OCI-LY7 (cell line): ENCODE measurements at regions of chr10 and their contacts with region 1.

Region 1: GRCh38 chr10:72098301-72099053 is 10.1 kb upstream of the SPOCK2 start:
- DNase-seq: no peak
- H3K4me3 ChIP-seq: no peak overlapping the region
- H3K27ac ChIP-seq: no peak overlapping the region
- H3K4me1 ChIP-seq: no peaks in the 10 kb centered on the region
- CTCF ChIP-seq: no peak

Region 2: GRCh38 chr10:72260588-72261322 is 162.3 kb after region 1 on chr10:
- CTCF ChIA-PET with region 1: no interaction called
- POLR2A ChIA-PET with region 1: interaction called, 12 read pairs
- intact Hi-C with region 1: no loop called
- DNase-seq: peak; percentile 91
- H3K4me3 ChIP-seq: peak overlapping the region; percentile 66
- H3K27ac ChIP-seq: peak overlapping the region; percentile 74
- H3K4me1 ChIP-seq: peaks cover 80% of the 10 kb centered on the region
- CTCF ChIP-seq: peak; percentile 43